MCF 10A (cell line): ENCODE measurements at regions of chr1 and their contacts with region 1.

Region 1: GRCh38 chr1:31789259-31790065 is 25.3 kb upstream of the ADGRB2 start:
- DNase-seq: peak; percentile 86
- H3K4me3 Mint-ChIP-seq: peak overlapping the region; percentile 76
- H3K27ac Mint-ChIP-seq: peak overlapping the region; percentile 95
- H3K4me1 Mint-ChIP-seq: peaks cover 8% of the 10 kb centered on the region
- H3K27me3 Mint-ChIP-seq: no peaks in the 10 kb centered on the region
- CTCF ChIP-seq: peak; percentile 92

Region 2: GRCh38 chr1:31394628-31395193 is 394.8 kb before region 1 on chr1:
- CTCF ChIA-PET with region 1: interaction called, 7 read pairs
- POLR2A ChIA-PET with region 1: interaction called, 3 read pairs
- intact Hi-C with region 1: loop called (anchors 2 kb)
- DNase-seq: peak; percentile 90
- H3K4me3 Mint-ChIP-seq: peak overlapping the region; percentile 40
- H3K27ac Mint-ChIP-seq: no peak overlapping the region
- H3K4me1 Mint-ChIP-seq: peaks cover 19% of the 10 kb centered on the region
- H3K27me3 Mint-ChIP-seq: no peaks in the 10 kb centered on the region
- CTCF ChIP-seq: peak; percentile 83

Region 3: GRCh38 chr1:31564134-31564989 is 225.1 kb before region 1 on chr1:
- CTCF ChIA-PET with region 1: interaction called, 42 read pairs
- POLR2A ChIA-PET with region 1: interaction called, 4 read pairs
- intact Hi-C with region 1: loop called (anchors 1 kb)
- DNase-seq: peak; percentile 72
- H3K4me3 Mint-ChIP-seq: no peak overlapping the region
- H3K27ac Mint-ChIP-seq: no peak overlapping the region
- H3K4me1 Mint-ChIP-seq: no peaks in the 10 kb centered on the region
- H3K27me3 Mint-ChIP-seq: no peaks in the 10 kb centered on the region
- CTCF ChIP-seq: peak; percentile 92

Region 4: DNA sequence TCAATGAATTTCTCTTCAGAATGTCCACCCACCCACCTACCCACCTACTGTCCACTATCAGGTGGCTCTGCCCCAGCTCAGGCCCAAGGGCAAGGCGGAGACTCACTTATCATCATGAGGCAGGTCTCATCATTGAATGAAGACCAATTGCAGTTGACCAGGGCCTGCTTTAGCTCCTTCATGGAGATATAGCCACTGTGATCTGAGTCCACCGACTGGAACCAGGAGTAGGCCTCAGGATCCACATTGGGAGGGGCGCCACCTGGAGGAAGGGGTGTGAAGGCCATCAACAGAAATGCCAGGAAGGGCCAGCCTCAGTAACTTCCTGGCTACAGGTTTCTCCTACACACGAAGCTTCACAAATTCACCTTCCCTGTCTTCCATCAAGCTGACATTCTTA is 156.4 kb before region 1 on chr1:
- CTCF ChIA-PET with region 1: interaction called, 11 read pairs
- POLR2A ChIA-PET with region 1: interaction called, 6 read pairs
- intact Hi-C with region 1: no loop called
- DNase-seq: peak; percentile 52
- H3K4me3 Mint-ChIP-seq: no peak overlapping the region
- H3K27ac Mint-ChIP-seq: no peak overlapping the region
- H3K4me1 Mint-ChIP-seq: peaks cover 21% of the 10 kb centered on the region
- H3K27me3 Mint-ChIP-seq: no peaks in the 10 kb centered on the region
- CTCF ChIP-seq: peak; percentile 33

Region 5: GRCh38 chr1:31663622-31664452 is 125.6 kb before region 1 on chr1:
- CTCF ChIA-PET with region 1: interaction called, 56 read pairs
- POLR2A ChIA-PET with region 1: interaction called, 44 read pairs
- intact Hi-C with region 1: loop called (anchors 1 kb)
- DNase-seq: peak; percentile 67
- H3K4me3 Mint-ChIP-seq: no peak overlapping the region
- H3K27ac Mint-ChIP-seq: no peak overlapping the region
- H3K4me1 Mint-ChIP-seq: peaks cover 24% of the 10 kb centered on the region
- H3K27me3 Mint-ChIP-seq: no peaks in the 10 kb centered on the region
- CTCF ChIP-seq: peak; percentile 95

Region 6: GRCh38 chr1:31745096-31745945 is 44.1 kb before region 1 on chr1:
- CTCF ChIA-PET with region 1: interaction called, 12 read pairs
- POLR2A ChIA-PET with region 1: interaction called, 7 read pairs
- intact Hi-C with region 1: loop called (anchors 2 kb)
- DNase-seq: peak; percentile 66
- H3K4me3 Mint-ChIP-seq: no peak overlapping the region
- H3K27ac Mint-ChIP-seq: no peak overlapping the region
- H3K4me1 Mint-ChIP-seq: peaks cover 9% of the 10 kb centered on the region
- H3K27me3 Mint-ChIP-seq: no peaks in the 10 kb centered on the region
- CTCF ChIP-seq: peak; percentile 89

Region 7: GRCh38 chr1:31815752-31816500 is 26.5 kb after region 1 on chr1 and contains the start of gene SPOCD1:
- CTCF ChIA-PET with region 1: no interaction called
- POLR2A ChIA-PET with region 1: no interaction called
- intact Hi-C with region 1: no loop called
- DNase-seq: peak; percentile 83
- H3K4me3 Mint-ChIP-seq: no peak within 1 kb of the TSS
- H3K27ac Mint-ChIP-seq: no peak within 1 kb of the TSS
- H3K4me1 Mint-ChIP-seq: no peaks in the 10 kb centered on the region
- H3K27me3 Mint-ChIP-seq: no peaks in the 10 kb centered on the region
- CTCF ChIP-seq: peak; percentile 93
- total RNA-seq, gene SPOCD1: 0.47 and 0.59 TPM in 2 replicates

Region 8: DNA sequence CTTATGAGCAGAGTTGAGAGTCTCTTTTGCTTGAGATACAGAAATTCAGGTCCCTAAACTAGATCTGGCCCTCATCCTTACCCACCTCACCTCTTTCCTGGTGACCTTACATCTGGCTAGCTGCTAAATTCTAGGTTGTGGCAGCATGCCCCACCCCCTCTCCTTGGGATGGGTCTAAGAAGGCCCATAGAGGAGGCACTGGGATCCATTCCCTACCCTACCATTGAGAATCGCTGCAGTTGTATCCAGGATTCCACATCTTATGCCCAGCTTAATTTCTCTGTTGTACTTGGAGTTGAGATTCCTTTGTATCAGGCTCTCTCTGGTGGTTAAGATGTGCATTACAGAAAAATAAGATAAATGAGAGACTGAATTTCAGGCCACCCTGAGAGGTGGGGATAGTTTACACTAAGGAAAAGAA is 273.8 kb after region 1 on chr1:
- CTCF ChIA-PET with region 1: interaction called, 3 read pairs
- POLR2A ChIA-PET with region 1: no interaction called
- intact Hi-C with region 1: loop called (anchors 10 kb)
- DNase-seq: peak; percentile 59
- H3K4me3 Mint-ChIP-seq: no peak overlapping the region
- H3K27ac Mint-ChIP-seq: peak overlapping the region; percentile 55
- H3K4me1 Mint-ChIP-seq: peaks cover 18% of the 10 kb centered on the region
- H3K27me3 Mint-ChIP-seq: no peaks in the 10 kb centered on the region
- CTCF ChIP-seq: peak; percentile 47